Naive thymus-derived CD4-positive, alpha-beta T cell (primary cell): ENCODE measurements at regions of chr16 and their contacts with region 1.

Region 1: GRCh38 chr16:30417529-30418349 is 10.3 kb downstream of the ZNF771 start:
- DNase-seq: peak; percentile 79 to 93 (median 88)
- ATAC-seq: peak; percentile 95
- H3K4me3 ChIP-seq: peak overlapping the region; percentile 76
- H3K4me3 Mint-ChIP-seq: peak overlapping the region; percentile 54 to 80 (median 70)
- H3K27ac ChIP-seq: peak overlapping the region; percentile 85
- H3K27ac Mint-ChIP-seq: peak overlapping the region in 7 of 9 donors; percentile 69 to 88 (median 81)
- H3K4me1 ChIP-seq: peaks cover 6 to 8% of the 10 kb centered on the region in 2 donors
- H3K4me1 Mint-ChIP-seq: peaks cover 12 to 31% (median 14%) of the 10 kb centered on the region in 7 donors
- H3K27me3 ChIP-seq: no peaks in the 10 kb centered on the region
- H3K27me3 Mint-ChIP-seq: no peaks in the 10 kb centered on the region

Region 2: GRCh38 chr16:30077656-30078055 is 340.1 kb before region 1 on chr16:
- CTCF ChIA-PET with region 1: no interaction called
- POLR2A ChIA-PET with region 1: no interaction called
- intact Hi-C with region 1: no loop called
- DNase-seq: no peak
- ATAC-seq: no peak
- H3K4me3 ChIP-seq: no peak overlapping the region
- H3K4me3 Mint-ChIP-seq: peak overlapping the region; percentile 41 to 99 (median 95)
- H3K27ac ChIP-seq: peak overlapping the region; percentile 85
- H3K27ac Mint-ChIP-seq: peak overlapping the region; percentile 78 to 98 (median 92)
- H3K4me1 ChIP-seq: peaks cover 20 to 21% of the 10 kb centered on the region in 2 donors
- H3K4me1 Mint-ChIP-seq: peaks cover 29 to 51% (median 39%) of the 10 kb centered on the region in 7 donors
- H3K27me3 ChIP-seq: no peaks in the 10 kb centered on the region
- H3K27me3 Mint-ChIP-seq: peaks cover 0 to 2% (median 0%) of the 10 kb centered on the region in 5 donors

Region 3: GRCh38 chr16:30370444-30371247 is 47.1 kb before region 1 on chr16 and contains the start of gene TBC1D10B:
- CTCF ChIA-PET with region 1: interaction called, 4 read pairs
- POLR2A ChIA-PET with region 1: interaction called, 20 read pairs
- intact Hi-C with region 1: no loop called
- DNase-seq: peak; percentile 89 to 100 (median 100)
- ATAC-seq: peak; percentile 91
- H3K4me3 ChIP-seq: peak within 1 kb of the TSS; percentile 76
- H3K4me3 Mint-ChIP-seq: peak within 1 kb of the TSS; percentile 83 to 92 (median 89)
- H3K27ac ChIP-seq: peak within 1 kb of the TSS; percentile 80
- H3K27ac Mint-ChIP-seq: peak within 1 kb of the TSS; percentile 63 to 98 (median 93)
- H3K4me1 ChIP-seq: peaks cover 24 to 25% of the 10 kb centered on the region in 2 donors
- H3K4me1 Mint-ChIP-seq: peaks cover 42 to 54% (median 50%) of the 10 kb centered on the region in 7 donors
- H3K27me3 ChIP-seq: no peaks in the 10 kb centered on the region
- H3K27me3 Mint-ChIP-seq: peaks cover 0 to 3% (median 0%) of the 10 kb centered on the region in 5 donors
- total RNA-seq, gene TBC1D10B: 23.2 to 70.0 (median 45.2) TPM

Region 4: GRCh38 chr16:30395155-30395991 is 22.4 kb before region 1 on chr16 and contains the start of gene ZNF48:
- CTCF ChIA-PET with region 1: interaction called, 3 read pairs
- POLR2A ChIA-PET with region 1: interaction called, 21 read pairs
- intact Hi-C with region 1: loop called in 1 of 2 experiments (anchors 2 kb)
- DNase-seq: peak; percentile 33 to 72 (median 45)
- ATAC-seq: peak; percentile 80
- H3K4me3 ChIP-seq: peak within 1 kb of the TSS; percentile 80
- H3K4me3 Mint-ChIP-seq: peak within 1 kb of the TSS; percentile 85 to 92 (median 88)
- H3K27ac ChIP-seq: peak within 1 kb of the TSS; percentile 71
- H3K27ac Mint-ChIP-seq: peak within 1 kb of the TSS; percentile 69 to 95 (median 83)
- H3K4me1 ChIP-seq: peaks cover 14 to 22% of the 10 kb centered on the region in 2 donors
- H3K4me1 Mint-ChIP-seq: peaks cover 23 to 39% (median 32%) of the 10 kb centered on the region in 7 donors
- H3K27me3 ChIP-seq: no peaks in the 10 kb centered on the region
- H3K27me3 Mint-ChIP-seq: no peaks in the 10 kb centered on the region
- total RNA-seq, gene ZNF48: 6.0 to 16.0 (median 15.6) TPM

Region 5: DNA sequence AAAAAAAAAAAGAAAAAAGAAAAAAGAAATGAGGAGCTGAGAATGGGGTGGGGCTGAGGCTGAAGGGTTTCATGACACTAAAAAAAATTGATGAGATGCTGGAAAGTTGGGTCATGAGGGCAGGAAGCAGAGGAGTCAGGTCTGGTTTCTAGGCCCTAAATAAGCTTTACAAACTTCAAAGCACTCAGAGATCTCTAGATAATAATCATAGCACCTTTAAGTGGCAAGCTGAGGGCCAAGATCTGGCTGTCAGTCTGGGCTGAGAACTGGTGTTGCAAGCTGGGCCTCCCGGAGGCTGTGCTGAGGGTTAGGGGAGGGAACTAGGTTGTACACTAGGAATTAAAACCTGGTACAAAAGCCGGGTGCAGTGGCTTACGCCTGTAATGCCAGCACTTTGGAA is 134.0 kb after region 1 on chr16:
- CTCF ChIA-PET with region 1: interaction called, 3 read pairs
- POLR2A ChIA-PET with region 1: interaction called, 14 read pairs
- intact Hi-C with region 1: no loop called
- DNase-seq: peak in 8 of 9 donors; percentile 53 to 82 (median 74)
- ATAC-seq: peak; percentile 89
- H3K4me3 ChIP-seq: peak overlapping the region; percentile 5
- H3K4me3 Mint-ChIP-seq: peak overlapping the region; percentile 32 to 87 (median 75)
- H3K27ac ChIP-seq: peak overlapping the region; percentile 59
- H3K27ac Mint-ChIP-seq: peak overlapping the region; percentile 83 to 98 (median 93)
- H3K4me1 ChIP-seq: peaks cover 24 to 32% of the 10 kb centered on the region in 2 donors
- H3K4me1 Mint-ChIP-seq: peaks cover 49 to 65% (median 55%) of the 10 kb centered on the region in 7 donors
- H3K27me3 ChIP-seq: no peaks in the 10 kb centered on the region
- H3K27me3 Mint-ChIP-seq: no peaks in the 10 kb centered on the region

Region 6: DNA sequence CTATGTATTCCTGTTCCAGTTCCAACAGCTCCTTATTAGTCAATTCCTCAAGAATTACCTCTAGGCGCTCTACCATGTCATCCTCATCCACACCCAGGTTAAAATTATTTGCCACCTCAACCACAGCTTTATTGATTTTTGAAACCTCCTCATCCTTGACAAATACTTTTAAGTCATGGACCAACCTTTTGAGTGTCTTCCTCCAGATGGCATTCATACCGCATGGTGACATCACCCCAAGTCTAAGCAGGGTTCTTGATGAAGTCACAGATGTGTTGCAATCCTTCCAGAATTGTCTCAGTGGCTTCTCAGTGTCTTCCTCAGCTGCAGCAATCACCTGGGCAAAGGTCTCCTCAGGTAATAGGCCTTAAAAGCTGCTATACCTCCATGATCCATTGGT is 436.0 kb after region 1 on chr16:
- CTCF ChIA-PET with region 1: no interaction called
- POLR2A ChIA-PET with region 1: no interaction called
- intact Hi-C with region 1: no loop called
- DNase-seq: no peak
- ATAC-seq: no peak
- H3K4me3 ChIP-seq: no peak overlapping the region
- H3K4me3 Mint-ChIP-seq: no peak overlapping the region
- H3K27ac ChIP-seq: no peak overlapping the region
- H3K27ac Mint-ChIP-seq: no peak overlapping the region
- H3K4me1 ChIP-seq: no peaks in the 10 kb centered on the region
- H3K4me1 Mint-ChIP-seq: peaks cover 0 to 7% (median 0%) of the 10 kb centered on the region in 7 donors
- H3K27me3 ChIP-seq: no peaks in the 10 kb centered on the region
- H3K27me3 Mint-ChIP-seq: no peaks in the 10 kb centered on the region

Region 7: GRCh38 chr16:32116080-32116479 is 1698.3 kb after region 1 on chr16:
- CTCF ChIA-PET with region 1: no interaction called
- POLR2A ChIA-PET with region 1: no interaction called
- intact Hi-C with region 1: no loop called
- DNase-seq: peak in 7 of 9 donors; percentile 0 to 24 (median 6)
- ATAC-seq: no peak
- H3K4me3 ChIP-seq: no peak overlapping the region
- H3K4me3 Mint-ChIP-seq: peak overlapping the region in 9 of 10 donors; percentile 36 to 76 (median 55)
- H3K27ac ChIP-seq: no peak overlapping the region
- H3K27ac Mint-ChIP-seq: no peak overlapping the region
- H3K4me1 ChIP-seq: no peaks in the 10 kb centered on the region
- H3K4me1 Mint-ChIP-seq: no peaks in the 10 kb centered on the region
- H3K27me3 ChIP-seq: no peaks in the 10 kb centered on the region
- H3K27me3 Mint-ChIP-seq: peaks cover 4 to 12% (median 4%) of the 10 kb centered on the region in 5 donors